Esophagus squamous epithelium (tissue), 5 donors: ENCODE measurements at regions of chr2 and their contacts with region 1.

Region 1: DNA sequence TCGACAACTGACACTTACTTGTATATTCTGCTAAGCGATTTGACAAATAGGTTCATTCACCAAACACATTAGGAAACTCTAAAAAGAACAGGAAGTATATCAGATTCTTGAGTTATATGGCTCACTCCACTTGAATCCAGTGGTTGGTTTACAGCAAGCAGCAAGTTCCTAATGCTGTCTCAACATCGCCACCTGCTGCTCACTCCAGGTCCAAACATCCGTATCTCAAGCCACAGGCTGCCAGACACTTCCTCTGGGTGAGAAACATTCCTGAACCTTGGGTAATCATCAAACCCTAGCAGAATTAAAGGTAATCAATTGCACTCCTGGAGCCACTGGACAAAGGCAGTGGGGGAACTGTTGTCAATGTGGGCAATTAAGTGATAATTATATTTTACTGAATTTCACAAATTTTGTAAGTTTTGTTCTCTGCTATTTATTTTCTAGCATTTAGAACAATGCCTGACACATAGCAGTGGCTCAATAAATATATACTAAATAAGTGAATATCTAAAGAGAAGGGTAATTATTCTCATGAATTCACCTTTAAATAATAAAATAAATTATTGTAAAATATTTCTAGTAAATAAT is 107.1 kb upstream of the TTN start:
- DNase-seq: peak; percentile 0
- H3K4me3 ChIP-seq: no peak overlapping the region
- H3K27ac ChIP-seq: no peak overlapping the region
- H3K4me1 ChIP-seq: no peaks in the 10 kb centered on the region
- H3K27me3 ChIP-seq: peaks cover 0 to 3% (median 0%) of the 10 kb centered on the region in 4 donors
- CTCF ChIP-seq: peak; percentile 55 to 71 (median 65)
- POLR2A ChIP-seq: no peak

Region 2: GRCh38 chr2:178345951-178346350 is 568.4 kb before region 1 on chr2:
- intact Hi-C with region 1: no loop called
- DNase-seq: no peak
- H3K4me3 ChIP-seq: no peak overlapping the region
- H3K27ac ChIP-seq: no peak overlapping the region
- H3K4me1 ChIP-seq: no peaks in the 10 kb centered on the region
- H3K27me3 ChIP-seq: no peaks in the 10 kb centered on the region
- CTCF ChIP-seq: no peak
- POLR2A ChIP-seq: no peak

Region 3: GRCh38 chr2:178796079-178796677 is 118.2 kb before region 1 on chr2:
- intact Hi-C with region 1: loop called (anchors 5 kb)
- DNase-seq: no peak
- H3K4me3 ChIP-seq: no peak overlapping the region
- H3K27ac ChIP-seq: no peak overlapping the region
- H3K4me1 ChIP-seq: no peaks in the 10 kb centered on the region
- H3K27me3 ChIP-seq: no peaks in the 10 kb centered on the region
- CTCF ChIP-seq: peak in 4 of 6 experiments; percentile 35 to 66 (median 52)
- POLR2A ChIP-seq: no peak